Posterior vena cava (tissue), 2 donors: ENCODE measurements at regions of chr16 and their contacts with region 1.

Region 1: GRCh38 chr16:82219298-82219697 is 49.3 kb upstream of the MPHOSPH6 start:
- DNase-seq: no peak

Region 2: GRCh38 chr16:81376880-81377279 is 842.4 kb before region 1 on chr16:
- intact Hi-C with region 1: loop called in 1 of 2 experiments (anchors 5 kb)
- DNase-seq: no peak

Region 3: GRCh38 chr16:82263521-82264143 is 44.3 kb after region 1 on chr16:
- intact Hi-C with region 1: no loop called
- DNase-seq: no peak